ENCODE measurements at regions of chr11 and their contacts with region 1.

Region 1: DNA sequence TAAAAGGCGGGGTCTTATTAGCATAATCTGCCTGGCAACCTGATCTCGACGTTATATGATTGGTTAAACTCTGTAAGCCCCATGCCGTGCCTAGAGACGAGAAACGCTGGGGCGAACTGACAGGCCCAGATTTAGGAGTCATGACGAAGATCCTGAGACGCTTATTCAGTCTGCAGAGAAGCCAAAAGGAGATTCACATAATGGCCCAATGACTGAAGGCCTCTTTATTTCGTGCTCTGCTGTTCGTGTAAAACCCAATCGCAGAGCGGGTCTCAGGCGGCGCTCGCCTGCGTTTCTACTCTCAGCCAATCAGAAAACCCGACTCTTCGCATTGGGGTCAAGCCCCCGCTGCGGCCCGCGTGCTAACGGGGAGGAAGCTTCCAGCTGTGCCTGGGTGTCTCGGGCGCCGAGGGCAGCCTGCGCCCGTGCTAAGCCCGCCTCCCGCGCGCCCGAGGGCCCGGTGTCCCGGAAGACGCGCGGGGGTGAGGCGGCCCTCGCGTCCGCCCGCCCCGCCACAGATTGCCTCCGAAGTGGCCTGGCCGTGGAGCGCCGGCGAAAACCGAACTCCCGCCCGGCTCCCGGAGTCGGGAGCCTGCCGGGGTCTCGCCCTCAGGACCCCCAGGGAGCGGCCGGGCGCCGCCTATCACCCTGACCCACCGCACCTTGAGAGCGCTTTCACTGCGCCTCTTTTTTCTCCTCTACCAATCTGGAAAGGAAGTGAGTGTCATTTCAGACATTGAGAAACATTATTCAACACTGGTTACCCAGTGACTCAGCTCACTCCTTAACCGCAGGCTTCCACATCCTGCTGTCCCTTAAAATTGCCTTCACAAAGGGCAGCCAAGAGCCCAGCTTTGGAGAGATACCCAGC is 446 bp upstream of the PRDM10 start:
- DNase-seq: peak; percentile 81
- ATAC-seq: peak; percentile 71
- H3K4me3 Mint-ChIP-seq: peak overlapping the region; percentile 99
- H3K27ac Mint-ChIP-seq: peak overlapping the region; percentile 100
- H3K4me1 Mint-ChIP-seq: peaks cover 29% of the 10 kb centered on the region
- H3K27me3 Mint-ChIP-seq: peaks cover 4% of the 10 kb centered on the region
- CTCF ChIP-seq: no peak

Region 2: DNA sequence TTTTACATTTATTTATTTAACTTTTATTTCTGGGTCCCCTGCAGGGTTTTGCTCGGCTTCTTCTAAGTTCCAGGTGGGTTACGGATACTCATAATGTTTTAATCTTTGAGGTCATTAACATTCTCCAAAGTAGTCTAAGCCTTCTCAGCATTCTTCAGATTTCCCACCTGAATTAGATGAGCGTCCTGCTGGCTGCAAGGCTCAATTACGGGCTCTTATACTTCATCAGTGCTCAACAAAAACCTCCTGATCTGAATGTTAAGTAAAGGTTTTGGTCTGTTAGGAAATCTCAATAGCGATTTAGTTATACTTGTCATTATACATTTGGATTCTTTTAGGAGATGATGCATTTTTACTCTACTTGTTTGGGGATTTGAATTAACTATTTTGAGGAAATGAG is 80.4 kb before region 1 on chr11:
- CTCF ChIA-PET with region 1: interaction called, 4 read pairs
- POLR2A ChIA-PET with region 1: interaction called, 13 read pairs
- intact Hi-C with region 1: loop called (anchors 2 kb)
- DNase-seq: no peak
- ATAC-seq: no peak
- H3K4me3 Mint-ChIP-seq: no peak overlapping the region
- H3K27ac Mint-ChIP-seq: no peak overlapping the region
- H3K4me1 Mint-ChIP-seq: peaks cover 4% of the 10 kb centered on the region
- H3K27me3 Mint-ChIP-seq: no peaks in the 10 kb centered on the region
- CTCF ChIP-seq: no peak

Region 3: GRCh38 chr11:129973068-129973467 is 30.0 kb before region 1 on chr11:
- CTCF ChIA-PET with region 1: interaction called, 3 read pairs
- POLR2A ChIA-PET with region 1: interaction called, 28 read pairs
- intact Hi-C with region 1: loop called (anchors 1 kb)
- DNase-seq: no peak
- ATAC-seq: peak; percentile 89
- H3K4me3 Mint-ChIP-seq: peak overlapping the region; percentile 13
- H3K27ac Mint-ChIP-seq: peak overlapping the region; percentile 1
- H3K4me1 Mint-ChIP-seq: peaks cover 32% of the 10 kb centered on the region
- H3K27me3 Mint-ChIP-seq: peaks cover 17% of the 10 kb centered on the region
- CTCF ChIP-seq: no peak

Region 4: DNA sequence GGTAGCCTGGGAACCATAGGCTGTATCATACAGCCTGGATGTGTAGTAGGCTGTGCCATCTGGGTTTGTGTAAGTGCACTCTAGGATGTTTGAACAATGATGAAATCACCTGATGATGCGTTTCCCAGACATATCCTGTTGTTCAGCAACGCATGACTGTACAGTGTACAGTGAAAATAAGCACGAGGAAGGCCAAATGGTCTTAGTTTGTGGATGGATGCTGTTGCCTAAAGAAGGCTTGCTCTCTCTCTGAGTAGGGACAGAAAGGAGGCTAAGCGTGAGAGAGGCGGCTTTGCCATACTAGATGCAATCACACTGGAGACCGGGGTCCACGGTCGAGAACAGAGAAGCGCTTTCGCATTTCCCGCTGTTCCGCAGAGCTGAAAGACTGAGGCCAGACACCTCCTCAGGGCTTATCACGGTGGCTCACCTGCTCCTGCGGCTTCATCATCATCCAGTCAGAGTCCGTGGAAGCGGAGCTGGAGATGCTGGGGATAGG is 39.1 kb after region 1 on chr11:
- CTCF ChIA-PET with region 1: no interaction called
- POLR2A ChIA-PET with region 1: interaction called, 10 read pairs
- intact Hi-C with region 1: no loop called
- DNase-seq: no peak
- ATAC-seq: no peak
- H3K4me3 Mint-ChIP-seq: no peak overlapping the region
- H3K27ac Mint-ChIP-seq: no peak overlapping the region
- H3K4me1 Mint-ChIP-seq: peaks cover 4% of the 10 kb centered on the region
- H3K27me3 Mint-ChIP-seq: peaks cover 18% of the 10 kb centered on the region
- CTCF ChIP-seq: no peak

Region 5: DNA sequence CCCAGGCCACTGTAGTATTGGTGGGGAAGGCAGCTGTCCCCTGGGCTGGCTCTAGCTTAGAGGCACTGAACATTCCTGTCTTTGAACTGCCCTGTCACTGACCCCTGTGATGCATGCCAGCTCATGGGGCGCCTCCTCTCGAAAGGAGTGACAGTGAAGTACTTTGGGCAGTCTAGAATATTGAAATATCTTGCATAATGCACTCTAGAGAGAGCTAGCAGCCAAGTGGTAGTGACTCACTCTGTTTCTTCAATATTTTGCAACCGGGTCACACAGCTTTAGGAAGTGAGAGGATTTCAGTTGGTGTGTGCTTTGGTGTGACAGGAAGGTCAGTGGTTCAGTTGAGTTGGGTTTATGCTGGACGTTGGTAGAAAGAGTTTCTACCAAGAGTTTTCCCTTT is 121.0 kb after region 1 on chr11:
- CTCF ChIA-PET with region 1: no interaction called
- POLR2A ChIA-PET with region 1: interaction called, 28 read pairs
- intact Hi-C with region 1: loop called (anchors 1 kb)
- DNase-seq: no peak
- ATAC-seq: no peak
- H3K4me3 Mint-ChIP-seq: no peak overlapping the region
- H3K27ac Mint-ChIP-seq: peak overlapping the region; percentile 27
- H3K4me1 Mint-ChIP-seq: peaks cover 57% of the 10 kb centered on the region
- H3K27me3 Mint-ChIP-seq: no peaks in the 10 kb centered on the region
- CTCF ChIP-seq: no peak

Region 6: DNA sequence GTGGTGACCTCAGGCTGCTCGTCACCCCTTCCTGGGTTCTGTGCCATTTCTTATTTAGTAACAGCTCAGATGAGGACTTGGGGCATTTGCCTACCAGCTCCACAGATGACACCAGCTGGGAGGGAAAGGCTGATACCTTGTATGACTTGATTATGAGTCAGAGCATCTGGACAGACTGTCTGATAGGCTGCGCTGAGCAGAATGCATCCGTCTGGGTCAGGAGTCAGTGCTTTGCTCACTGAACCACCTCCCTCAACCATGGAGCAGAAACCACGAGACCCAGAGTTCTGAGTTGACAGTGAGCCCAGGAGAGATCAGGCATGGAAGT is 163.3 kb after region 1 on chr11:
- CTCF ChIA-PET with region 1: no interaction called
- POLR2A ChIA-PET with region 1: interaction called, 26 read pairs
- intact Hi-C with region 1: loop called (anchors 1 kb)
- DNase-seq: peak; percentile 48
- ATAC-seq: peak; percentile 87
- H3K4me3 Mint-ChIP-seq: peak overlapping the region; percentile 66
- H3K27ac Mint-ChIP-seq: peak overlapping the region; percentile 93
- H3K4me1 Mint-ChIP-seq: peaks cover 84% of the 10 kb centered on the region
- H3K27me3 Mint-ChIP-seq: no peaks in the 10 kb centered on the region
- CTCF ChIP-seq: no peak